ENCODE measurements at regions of chr6 and their contacts with region 1.

Region 1: DNA sequence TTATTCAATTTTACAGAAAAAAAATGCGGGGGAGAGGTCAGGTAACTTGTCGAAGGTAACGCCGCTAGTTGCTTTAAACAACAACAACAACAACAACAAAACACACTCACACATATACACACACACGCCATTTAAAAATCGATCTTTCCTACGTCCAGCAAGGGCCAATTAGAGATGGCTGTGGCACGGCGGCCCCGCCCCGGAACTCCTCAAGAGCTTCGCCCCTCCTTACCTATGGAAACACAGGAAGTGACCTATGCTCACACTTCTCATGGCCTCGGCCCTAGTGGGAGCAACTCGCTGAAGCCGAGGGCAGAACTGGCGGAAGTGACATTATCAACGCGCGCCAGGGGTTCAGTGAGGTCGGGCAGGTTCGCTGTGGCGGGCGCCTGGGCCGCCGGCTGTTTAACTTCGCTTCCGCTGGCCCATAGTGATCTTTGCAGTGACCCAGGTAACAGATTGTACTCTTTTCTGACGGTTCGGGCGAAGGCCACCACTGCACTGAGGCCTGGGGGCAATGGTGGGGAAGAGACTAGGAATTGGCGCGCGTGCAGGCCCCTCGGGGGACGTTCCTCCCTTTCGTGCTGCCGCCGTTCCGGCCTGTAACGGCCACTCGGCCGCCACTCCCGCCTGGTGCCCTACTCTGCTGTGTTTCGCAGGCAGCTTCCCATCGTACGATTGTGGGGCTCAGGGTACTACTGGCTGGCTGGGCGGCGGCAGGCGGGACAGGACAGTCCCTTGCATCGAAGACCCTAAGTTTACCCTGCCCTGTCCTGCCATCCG is at the start of gene TBP:
- DNase-seq: peak; percentile 99
- ATAC-seq: peak; percentile 96
- H3K4me3 Mint-ChIP-seq: no peak within 1 kb of the TSS
- H3K27ac Mint-ChIP-seq: no peak within 1 kb of the TSS
- H3K4me1 Mint-ChIP-seq: peaks cover 39% of the 10 kb centered on the region
- H3K27me3 Mint-ChIP-seq: no peaks in the 10 kb centered on the region
- total RNA-seq, gene TBP: 25.6 to 26.8 TPM

Region 2: GRCh38 chr6:170523256-170524171 is 30.7 kb before region 1 on chr6:
- CTCF ChIA-PET with region 1: no interaction called
- DNase-seq: peak; percentile 64
- ATAC-seq: no peak
- H3K4me3 Mint-ChIP-seq: no peak overlapping the region
- H3K27ac Mint-ChIP-seq: no peak overlapping the region
- H3K4me1 Mint-ChIP-seq: peaks cover 16% of the 10 kb centered on the region
- H3K27me3 Mint-ChIP-seq: peaks cover 51% of the 10 kb centered on the region

Region 3: GRCh38 chr6:170584181-170584953 is 30.2 kb after region 1 on chr6 and contains the start of gene PDCD2:
- CTCF ChIA-PET with region 1: interaction called, 10 read pairs
- DNase-seq: peak; percentile 96
- ATAC-seq: peak; percentile 94
- H3K4me3 Mint-ChIP-seq: peak within 1 kb of the TSS; percentile 98
- H3K27ac Mint-ChIP-seq: peak within 1 kb of the TSS; percentile 95
- H3K4me1 Mint-ChIP-seq: peaks cover 26% of the 10 kb centered on the region
- H3K27me3 Mint-ChIP-seq: peaks cover 3% of the 10 kb centered on the region
- total RNA-seq, gene PDCD2: 75.4 to 99.7 TPM